Heart left ventricle (tissue), 16 donors: ENCODE measurements at regions of chr11 and their contacts with region 1.

Region 1: DNA sequence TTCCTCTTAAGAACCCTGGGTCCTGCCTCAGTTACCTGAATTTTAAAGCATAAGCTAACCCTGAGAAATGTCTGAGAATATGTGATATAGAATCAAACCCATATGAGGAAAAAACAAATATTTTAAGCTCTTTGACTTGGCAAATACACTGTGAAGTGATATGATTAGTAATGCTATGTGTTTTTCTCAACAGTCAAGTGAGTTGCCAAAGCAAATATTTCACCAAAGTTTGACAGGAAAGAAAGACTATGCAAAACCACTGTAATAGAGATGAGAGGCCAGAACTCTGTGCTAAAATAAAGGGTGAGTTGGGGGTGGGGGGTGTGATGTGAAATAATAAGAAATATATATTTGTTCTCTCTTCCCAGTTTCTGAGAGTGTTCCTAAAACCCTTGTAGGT is 613.5 kb upstream of the CCDC179 start:
- DNase-seq: no peak
- ATAC-seq: no peak
- H3K4me3 ChIP-seq: no peak overlapping the region
- H3K27ac ChIP-seq: no peak overlapping the region
- H3K4me1 ChIP-seq: no peaks in the 10 kb centered on the region
- H3K27me3 ChIP-seq: no peaks in the 10 kb centered on the region
- CTCF ChIP-seq: no peak
- POLR2A ChIP-seq: no peak

Region 2: GRCh38 chr11:23359297-23359696 is 114.5 kb before region 1 on chr11:
- intact Hi-C with region 1: no loop called
- DNase-seq: no peak
- ATAC-seq: peak in 1 of 4 donors; percentile 41
- H3K4me3 ChIP-seq: no peak overlapping the region
- H3K27ac ChIP-seq: no peak overlapping the region
- H3K4me1 ChIP-seq: no peaks in the 10 kb centered on the region
- H3K27me3 ChIP-seq: no peaks in the 10 kb centered on the region
- CTCF ChIP-seq: no peak
- POLR2A ChIP-seq: no peak

Region 3: GRCh38 chr11:23413057-23413456 is 60.7 kb before region 1 on chr11:
- intact Hi-C with region 1: loop called in 1 of 10 experiments (anchors 10 kb)
- DNase-seq: no peak
- ATAC-seq: no peak
- H3K4me3 ChIP-seq: no peak overlapping the region
- H3K27ac ChIP-seq: no peak overlapping the region
- H3K4me1 ChIP-seq: no peaks in the 10 kb centered on the region
- H3K27me3 ChIP-seq: no peaks in the 10 kb centered on the region
- CTCF ChIP-seq: no peak
- POLR2A ChIP-seq: no peak

Region 4: DNA sequence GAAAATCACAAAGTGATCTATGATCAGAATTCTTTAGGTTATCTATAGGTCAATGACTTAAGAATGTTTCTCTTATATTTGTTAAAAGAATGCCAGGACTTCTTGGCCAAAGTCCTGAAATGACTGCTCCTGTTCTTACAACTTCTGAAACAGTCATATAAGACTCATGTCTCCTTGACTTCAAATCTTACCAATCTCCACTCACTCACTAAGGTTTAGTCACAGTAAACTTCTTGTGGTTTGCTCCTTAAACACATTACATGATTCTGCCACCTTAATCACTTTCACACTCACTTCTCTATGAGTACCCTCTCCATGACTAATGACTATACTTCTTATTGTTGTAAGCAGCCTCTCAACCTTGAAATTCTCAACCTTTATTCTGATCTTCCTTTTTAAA is 35.2 kb after region 1 on chr11:
- intact Hi-C with region 1: no loop called
- DNase-seq: no peak
- ATAC-seq: no peak
- H3K4me3 ChIP-seq: no peak overlapping the region
- H3K27ac ChIP-seq: no peak overlapping the region
- H3K4me1 ChIP-seq: no peaks in the 10 kb centered on the region
- H3K27me3 ChIP-seq: peaks cover 0 to 5% (median 0%) of the 10 kb centered on the region in 9 donors
- CTCF ChIP-seq: no peak
- POLR2A ChIP-seq: no peak

Region 5: DNA sequence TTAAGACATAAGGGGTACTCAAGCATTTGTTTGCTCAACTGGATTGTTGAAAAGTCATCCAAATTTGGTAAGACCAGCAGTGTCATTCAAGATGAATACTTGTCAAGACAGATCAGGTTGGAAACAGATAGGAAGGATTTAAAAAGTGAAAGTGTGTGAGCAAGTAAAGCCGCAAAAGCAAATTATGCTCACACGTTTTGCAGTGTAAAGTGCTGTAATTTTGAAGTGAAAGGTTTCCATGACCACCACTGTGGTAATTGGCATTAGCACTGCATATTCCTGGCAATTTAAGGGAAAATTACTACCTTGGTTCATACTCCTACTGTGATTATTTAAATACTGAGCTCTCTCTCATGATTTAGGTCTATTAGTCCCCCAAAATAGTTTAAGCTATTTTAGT is 90.6 kb after region 1 on chr11:
- intact Hi-C with region 1: no loop called
- DNase-seq: no peak
- ATAC-seq: no peak
- H3K4me3 ChIP-seq: no peak overlapping the region
- H3K27ac ChIP-seq: no peak overlapping the region
- H3K4me1 ChIP-seq: no peaks in the 10 kb centered on the region
- H3K27me3 ChIP-seq: no peaks in the 10 kb centered on the region
- CTCF ChIP-seq: no peak
- POLR2A ChIP-seq: no peak